Activated CD8-positive, alpha-beta T cell treated with anti-CD3 and anti-CD28 coated beads for 36 hours (primary cell): ENCODE measurements at regions of chr1 and their contacts with region 1.

Region 1: GRCh38 chr1:67339623-67340343 is 32.1 kb downstream of the IL12RB2 start:
- DNase-seq: peak; percentile 59
- ATAC-seq: peak; percentile 65
- H3K4me3 Mint-ChIP-seq: peak overlapping the region; percentile 2
- H3K27ac Mint-ChIP-seq: peak overlapping the region; percentile 89
- H3K4me1 Mint-ChIP-seq: peaks cover 83% of the 10 kb centered on the region
- H3K27me3 Mint-ChIP-seq: no peaks in the 10 kb centered on the region
- CTCF ChIP-seq: no peak

Region 2: GRCh38 chr1:67230539-67230938 is 109.2 kb before region 1 on chr1:
- CTCF ChIA-PET with region 1: no interaction called
- POLR2A ChIA-PET with region 1: no interaction called
- intact Hi-C with region 1: loop called (anchors 5 kb)
- DNase-seq: no peak
- ATAC-seq: no peak
- H3K4me3 Mint-ChIP-seq: no peak overlapping the region
- H3K27ac Mint-ChIP-seq: no peak overlapping the region
- H3K4me1 Mint-ChIP-seq: peaks cover 9% of the 10 kb centered on the region
- H3K27me3 Mint-ChIP-seq: peaks cover 5% of the 10 kb centered on the region
- CTCF ChIP-seq: no peak

Region 3: GRCh38 chr1:67274623-67275325 is 65.0 kb before region 1 on chr1:
- CTCF ChIA-PET with region 1: interaction called, 9 read pairs
- POLR2A ChIA-PET with region 1: interaction called, 12 read pairs
- intact Hi-C with region 1: no loop called
- DNase-seq: peak; percentile 47
- ATAC-seq: peak; percentile 91
- H3K4me3 Mint-ChIP-seq: no peak overlapping the region
- H3K27ac Mint-ChIP-seq: peak overlapping the region; percentile 79
- H3K4me1 Mint-ChIP-seq: peaks cover 41% of the 10 kb centered on the region
- H3K27me3 Mint-ChIP-seq: peaks cover 3% of the 10 kb centered on the region
- CTCF ChIP-seq: no peak

Region 4: GRCh38 chr1:67285780-67286488 is 53.8 kb before region 1 on chr1:
- CTCF ChIA-PET with region 1: interaction called, 6 read pairs
- POLR2A ChIA-PET with region 1: interaction called, 11 read pairs
- intact Hi-C with region 1: loop called (anchors 5 kb)
- DNase-seq: peak; percentile 57
- ATAC-seq: peak; percentile 96
- H3K4me3 Mint-ChIP-seq: no peak overlapping the region
- H3K27ac Mint-ChIP-seq: peak overlapping the region; percentile 88
- H3K4me1 Mint-ChIP-seq: peaks cover 37% of the 10 kb centered on the region
- H3K27me3 Mint-ChIP-seq: peaks cover 4% of the 10 kb centered on the region
- CTCF ChIP-seq: no peak

Region 5: GRCh38 chr1:67418839-67419586 is 79.2 kb after region 1 on chr1:
- CTCF ChIA-PET with region 1: no interaction called
- POLR2A ChIA-PET with region 1: no interaction called
- intact Hi-C with region 1: loop called (anchors 5 kb)
- DNase-seq: no peak
- ATAC-seq: no peak
- H3K4me3 Mint-ChIP-seq: no peak overlapping the region
- H3K27ac Mint-ChIP-seq: peak overlapping the region; percentile 71
- H3K4me1 Mint-ChIP-seq: peaks cover 76% of the 10 kb centered on the region
- H3K27me3 Mint-ChIP-seq: no peaks in the 10 kb centered on the region
- CTCF ChIP-seq: no peak

Region 6: DNA sequence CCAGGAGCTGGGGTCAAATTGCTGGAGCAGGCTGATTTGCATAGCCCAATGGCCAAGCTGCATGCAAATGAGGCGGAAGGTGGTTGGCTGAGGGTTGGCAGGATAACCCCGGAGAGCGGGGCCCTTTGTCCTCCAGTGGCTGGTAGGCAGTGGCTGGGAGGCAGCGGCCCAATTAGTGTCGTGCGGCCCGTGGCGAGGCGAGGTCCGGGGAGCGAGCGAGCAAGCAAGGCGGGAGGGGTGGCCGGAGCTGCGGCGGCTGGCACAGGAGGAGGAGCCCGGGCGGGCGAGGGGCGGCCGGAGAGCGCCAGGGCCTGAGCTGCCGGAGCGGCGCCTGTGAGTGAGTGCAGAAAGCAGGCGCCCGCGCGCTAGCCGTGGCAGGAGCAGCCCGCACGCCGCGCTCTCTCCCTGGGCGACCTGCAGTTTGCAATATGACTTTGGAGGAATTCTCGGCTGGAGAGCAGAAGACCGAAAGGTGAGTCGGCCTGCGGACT is 345.3 kb after region 1 on chr1 and contains the start of gene GADD45A:
- CTCF ChIA-PET with region 1: no interaction called
- POLR2A ChIA-PET with region 1: interaction called, 3 read pairs
- intact Hi-C with region 1: loop called (anchors 10 kb)
- DNase-seq: peak; percentile 97
- ATAC-seq: peak; percentile 85
- H3K4me3 Mint-ChIP-seq: peak within 1 kb of the TSS; percentile 90
- H3K27ac Mint-ChIP-seq: peak within 1 kb of the TSS; percentile 97
- H3K4me1 Mint-ChIP-seq: peaks cover 49% of the 10 kb centered on the region
- H3K27me3 Mint-ChIP-seq: no peaks in the 10 kb centered on the region
- CTCF ChIP-seq: no peak
- total RNA-seq, gene GADD45A: 33.5 to 34.3 TPM